Right cardiac atrium (tissue), 5 donors: ENCODE measurements at regions of chr2 and their contacts with region 1.

Region 1: GRCh38 chr2:148565272-148565894 is 79.2 kb upstream of the EPC2 start:
- DNase-seq: no peak
- ATAC-seq: peak; percentile 38 to 60
- H3K4me3 ChIP-seq: no peak overlapping the region
- H3K27ac ChIP-seq: no peak overlapping the region
- H3K4me1 ChIP-seq: no peaks in the 10 kb centered on the region
- H3K27me3 ChIP-seq: no peaks in the 10 kb centered on the region

Region 2: GRCh38 chr2:148455796-148456195 is 109.6 kb before region 1 on chr2:
- intact Hi-C with region 1: no loop called
- DNase-seq: no peak
- ATAC-seq: no peak
- H3K4me3 ChIP-seq: no peak overlapping the region
- H3K27ac ChIP-seq: no peak overlapping the region
- H3K4me1 ChIP-seq: no peaks in the 10 kb centered on the region
- H3K27me3 ChIP-seq: no peaks in the 10 kb centered on the region

Region 3: DNA sequence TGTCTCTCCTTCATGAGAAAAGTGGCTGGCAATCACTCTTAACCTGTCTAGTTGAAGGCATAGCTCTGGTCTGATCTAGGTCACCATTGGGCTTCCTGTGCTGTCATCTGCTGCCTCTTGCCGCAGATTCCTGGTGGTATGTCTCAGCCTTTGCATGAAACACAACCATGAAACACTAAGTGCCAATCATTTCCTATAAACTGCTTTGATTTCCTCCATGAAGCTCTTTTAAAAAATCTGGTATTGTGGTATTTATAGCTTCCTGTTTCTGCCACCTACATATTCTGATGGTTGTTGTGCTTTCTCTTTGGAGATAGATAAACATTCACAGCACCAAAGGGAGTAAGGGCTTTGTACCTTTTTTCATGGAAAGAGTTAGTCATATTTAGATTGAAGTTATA is 40.9 kb before region 1 on chr2:
- intact Hi-C with region 1: no loop called
- DNase-seq: no peak
- ATAC-seq: no peak
- H3K4me3 ChIP-seq: no peak overlapping the region
- H3K27ac ChIP-seq: no peak overlapping the region
- H3K4me1 ChIP-seq: no peaks in the 10 kb centered on the region
- H3K27me3 ChIP-seq: no peaks in the 10 kb centered on the region

Region 4: DNA sequence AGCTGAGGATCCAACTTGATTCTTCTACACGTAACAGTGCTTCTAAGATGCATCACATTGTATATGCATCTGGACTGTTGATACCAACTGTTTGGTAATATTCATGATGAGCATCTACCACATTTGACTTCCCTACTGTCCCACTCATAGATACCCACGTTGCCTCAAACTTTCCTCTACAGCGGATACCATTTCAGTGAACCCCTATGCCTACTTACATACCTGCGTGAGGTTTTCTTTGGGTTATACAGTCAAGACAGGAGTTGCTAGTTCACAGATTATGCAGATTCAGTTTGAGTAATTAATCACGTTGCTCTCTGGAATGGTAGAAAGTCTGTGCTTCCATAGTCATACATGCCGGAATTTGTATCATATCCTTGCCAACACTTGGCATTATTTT is 119.1 kb after region 1 on chr2:
- intact Hi-C with region 1: no loop called
- DNase-seq: no peak
- ATAC-seq: no peak
- H3K4me3 ChIP-seq: no peak overlapping the region
- H3K27ac ChIP-seq: no peak overlapping the region
- H3K4me1 ChIP-seq: peaks cover 2% of the 10 kb centered on the region
- H3K27me3 ChIP-seq: no peaks in the 10 kb centered on the region

Region 5: GRCh38 chr2:148971547-148971946 is 406.2 kb after region 1 on chr2:
- intact Hi-C with region 1: loop called in 1 of 4 experiments (anchors 10 kb)
- DNase-seq: no peak
- ATAC-seq: no peak
- H3K4me3 ChIP-seq: no peak overlapping the region
- H3K27ac ChIP-seq: no peak overlapping the region
- H3K4me1 ChIP-seq: no peaks in the 10 kb centered on the region
- H3K27me3 ChIP-seq: no peaks in the 10 kb centered on the region